Aorta (tissue), 5 donors: ENCODE measurements at regions of chr9 and their contacts with region 1.

Region 1: DNA sequence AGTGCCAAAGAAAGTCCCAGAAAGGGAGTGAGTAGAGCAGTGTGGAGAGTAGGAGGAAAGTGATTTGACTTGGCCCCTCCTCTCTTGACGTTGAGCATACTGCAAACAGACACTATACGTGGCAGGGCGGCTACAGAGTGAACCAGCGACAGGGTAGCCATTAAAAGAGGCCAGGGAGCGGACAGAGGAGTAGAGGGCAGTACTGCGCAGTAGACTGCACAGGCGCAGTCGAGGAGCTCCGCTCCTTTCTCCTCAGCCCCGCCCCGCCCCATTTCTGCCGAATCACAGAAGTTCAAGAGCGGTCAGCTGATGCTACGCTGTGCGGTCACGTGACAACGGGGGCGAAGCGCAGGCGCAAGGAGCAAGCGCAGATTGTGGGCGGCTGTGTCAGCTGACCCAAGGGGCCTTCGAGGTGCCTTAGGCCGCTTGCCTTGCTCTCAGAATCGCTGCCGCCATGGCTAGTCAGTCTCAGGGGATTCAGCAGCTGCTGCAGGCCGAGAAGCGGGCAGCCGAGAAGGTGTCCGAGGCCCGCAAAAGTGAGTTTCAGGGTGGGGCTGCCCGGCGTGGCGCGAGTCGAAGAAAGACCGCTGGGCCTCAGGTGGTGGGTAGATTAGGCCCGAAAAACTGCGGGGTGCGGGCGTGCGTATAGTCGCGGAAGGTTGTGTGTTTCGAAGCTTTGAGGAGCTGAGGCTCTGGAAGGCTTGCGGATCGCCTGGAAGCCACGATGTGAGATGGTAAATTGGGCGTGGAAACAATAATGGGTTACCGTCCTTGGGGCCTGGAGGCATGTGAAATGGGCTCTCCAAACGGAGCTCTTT is at the start of gene ATP6V1G1:
- DNase-seq: peak; percentile 100
- ATAC-seq: peak; percentile 100
- H3K4me3 ChIP-seq: peak within 1 kb of the TSS; percentile 63 to 67
- H3K27ac ChIP-seq: peak within 1 kb of the TSS; percentile 38 to 73
- H3K4me1 ChIP-seq: peaks cover 0 to 2% of the 10 kb centered on the region in 2 donors
- H3K27me3 ChIP-seq: no peaks in the 10 kb centered on the region
- total RNA-seq, gene ATP6V1G1: 55.8 to 65.4 TPM

Region 2: GRCh38 chr9:114405294-114406034 is 182.1 kb before region 1 on chr9:
- intact Hi-C with region 1: loop called in 1 of 2 experiments (anchors 10 kb)
- DNase-seq: peak; percentile 85 to 87
- ATAC-seq: peak; percentile 91
- H3K4me3 ChIP-seq: no peak overlapping the region
- H3K27ac ChIP-seq: no peak overlapping the region
- H3K4me1 ChIP-seq: no peaks in the 10 kb centered on the region
- H3K27me3 ChIP-seq: no peaks in the 10 kb centered on the region